Astrocyte of the cerebellum (primary cell): ENCODE measurements at regions of chr12 and their contacts with region 1.

Region 1: DNA sequence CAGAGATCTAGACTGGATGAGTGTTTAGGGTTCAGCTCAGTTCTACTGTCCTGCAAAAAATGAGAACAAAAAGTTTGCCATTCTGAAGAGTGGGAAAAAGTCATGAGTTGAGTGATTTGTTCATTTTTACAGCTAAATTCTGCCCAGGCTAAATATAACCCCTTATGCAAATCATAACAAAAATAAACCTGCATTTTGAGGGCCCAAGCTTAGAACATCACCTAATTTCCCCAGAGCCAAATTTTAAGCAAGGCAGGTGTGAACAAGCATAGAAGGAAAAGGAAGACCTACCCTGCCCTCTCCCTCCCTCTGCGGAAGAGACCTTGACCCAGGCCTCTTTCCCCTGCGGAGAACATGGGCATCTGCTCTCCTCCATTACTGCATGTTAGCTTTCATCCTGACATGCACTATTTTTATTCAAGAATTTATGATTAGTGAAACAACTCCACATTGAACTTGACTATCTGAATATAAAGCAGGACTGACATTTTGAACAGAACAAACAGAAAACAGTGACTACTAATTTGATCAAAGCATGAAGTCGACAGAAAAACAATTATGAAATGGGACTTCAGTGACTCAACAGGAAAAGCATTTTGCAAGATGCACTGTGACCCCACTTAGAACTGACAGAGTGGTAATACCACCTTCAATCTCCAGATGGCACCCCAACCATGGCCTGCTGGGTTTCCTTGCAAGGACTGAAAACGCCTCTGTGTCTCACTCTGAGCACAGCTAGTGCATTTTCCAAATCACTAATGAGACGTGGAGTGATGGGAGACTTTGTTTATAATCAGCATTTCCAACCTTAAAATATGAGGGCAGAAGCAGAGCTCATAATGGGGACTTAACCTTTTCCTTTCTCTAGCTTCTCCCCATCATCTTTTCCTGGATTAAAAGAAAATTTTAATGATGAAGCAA is 30.9 kb upstream of the SELPLG start:
- DNase-seq: peak; percentile 95
- H3K4me3 ChIP-seq: no peak overlapping the region
- CTCF ChIP-seq: peak; percentile 96

Region 2: DNA sequence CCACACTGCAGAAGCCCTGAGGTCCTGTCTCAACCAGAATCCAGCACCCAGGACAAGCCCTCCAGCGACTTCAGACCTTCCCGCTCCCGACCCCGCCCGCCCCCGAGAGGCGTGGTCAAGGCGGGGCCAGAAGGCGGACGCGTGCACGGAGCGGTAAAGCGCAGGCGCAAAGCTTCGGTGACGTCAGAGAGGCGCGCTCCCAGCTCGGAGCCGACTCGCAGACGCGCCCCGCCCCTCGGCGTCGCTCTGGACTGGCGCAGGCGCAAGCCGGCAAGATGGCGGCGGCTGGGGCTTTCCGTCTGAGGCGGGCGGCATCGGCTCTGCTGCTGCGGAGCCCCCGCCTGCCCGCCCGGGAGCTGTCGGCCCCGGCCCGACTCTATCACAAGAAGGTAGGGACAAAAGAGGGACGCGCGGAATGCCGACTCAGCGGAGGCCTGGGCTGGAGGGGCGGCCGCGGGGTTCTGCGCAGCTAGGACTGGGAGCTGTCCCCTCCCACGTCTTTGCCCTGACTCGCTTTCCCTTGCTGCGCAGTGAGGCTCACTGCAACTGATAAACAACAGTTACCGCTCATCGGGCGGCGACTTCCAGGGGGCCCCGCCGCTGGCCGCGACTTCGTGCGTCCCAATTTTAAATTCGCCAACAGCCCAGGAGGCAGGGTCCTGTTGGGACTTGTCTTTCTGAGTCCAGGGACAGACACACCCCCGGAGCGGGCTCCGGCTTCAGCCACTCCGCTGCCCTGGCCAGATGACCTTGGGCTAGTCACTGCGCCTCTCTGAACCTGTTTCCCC is 102.1 kb before region 1 on chr12 and contains the start of gene ISCU:
- in situ Hi-C with region 1: loop called (anchors 5 kb)
- DNase-seq: peak; percentile 92
- H3K4me3 ChIP-seq: peak within 1 kb of the TSS; percentile 100
- CTCF ChIP-seq: no peak

Region 3: GRCh38 chr12:108722992-108723766 is 58.6 kb after region 1 on chr12:
- in situ Hi-C with region 1: loop called (anchors 10 kb)
- DNase-seq: peak; percentile 39
- H3K4me3 ChIP-seq: no peak overlapping the region
- CTCF ChIP-seq: no peak

Region 4: DNA sequence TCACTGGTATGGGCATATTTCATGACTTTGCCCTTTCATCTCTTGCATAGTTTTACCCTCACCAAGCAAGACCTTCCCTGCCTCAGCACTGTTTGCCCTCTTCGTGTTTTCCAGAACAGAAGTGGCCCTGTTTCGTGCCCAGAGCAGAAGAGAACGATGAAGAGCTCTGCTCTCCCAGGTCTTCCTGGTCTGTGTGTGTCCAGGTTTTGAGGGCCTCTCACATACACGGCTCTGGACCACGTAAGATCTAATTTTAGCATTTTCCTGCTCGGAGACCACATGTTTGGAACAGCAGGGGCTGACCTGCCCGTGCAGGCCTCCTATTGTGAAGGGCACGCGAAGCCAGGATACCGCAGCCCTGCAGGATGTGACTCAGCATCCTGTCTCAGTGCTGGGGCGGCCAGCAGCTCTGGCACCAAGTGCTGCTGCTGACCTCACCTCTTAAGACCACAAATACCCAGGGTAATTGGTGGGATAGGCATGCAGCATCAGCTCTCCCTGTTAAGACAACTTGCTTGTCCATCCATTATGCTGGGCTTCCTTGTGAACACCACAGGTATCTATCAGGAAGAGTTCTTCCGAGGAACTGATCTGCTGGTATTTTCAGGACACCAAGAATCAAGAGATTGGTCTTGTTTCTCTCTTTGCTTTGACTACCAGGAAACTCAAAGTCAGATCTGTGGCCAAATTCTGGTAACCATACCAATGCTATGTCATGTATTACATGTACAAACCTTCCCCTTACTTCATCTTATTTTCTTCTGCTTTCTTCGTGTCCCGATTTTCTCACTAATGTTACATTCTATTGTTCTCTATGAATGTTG is 173.8 kb after region 1 on chr12:
- in situ Hi-C with region 1: loop called (anchors 25 kb)
- DNase-seq: peak; percentile 100
- H3K4me3 ChIP-seq: no peak overlapping the region
- CTCF ChIP-seq: no peak